Activated CD4-positive, alpha-beta T cell treated with anti-CD3 and anti-CD28 coated beads, Interleukin-2, amount 10 ng/mL, durations not matched to agents 24 days and 14 days (primary cell): ENCODE measurements at regions of chr3 and their contacts with region 1.

Region 1: GRCh38 chr3:124467980-124468902 is 262.0 kb upstream of the UMPS start:
- DNase-seq: peak; percentile 75
- H3K4me3 Mint-ChIP-seq: no peak overlapping the region
- H3K27ac Mint-ChIP-seq: no peak overlapping the region
- H3K4me1 Mint-ChIP-seq: no peaks in the 10 kb centered on the region
- H3K27me3 Mint-ChIP-seq: peaks cover 18% of the 10 kb centered on the region

Region 2: GRCh38 chr3:123997543-123997942 is 470.7 kb before region 1 on chr3:
- intact Hi-C with region 1: no loop called
- DNase-seq: no peak
- H3K4me3 Mint-ChIP-seq: no peak overlapping the region
- H3K27ac Mint-ChIP-seq: no peak overlapping the region
- H3K4me1 Mint-ChIP-seq: no peaks in the 10 kb centered on the region
- H3K27me3 Mint-ChIP-seq: peaks cover 10% of the 10 kb centered on the region

Region 3: GRCh38 chr3:124351430-124352148 is 116.7 kb before region 1 on chr3:
- intact Hi-C with region 1: loop called (anchors 5 kb)
- DNase-seq: no peak
- H3K4me3 Mint-ChIP-seq: no peak overlapping the region
- H3K27ac Mint-ChIP-seq: no peak overlapping the region
- H3K4me1 Mint-ChIP-seq: no peaks in the 10 kb centered on the region
- H3K27me3 Mint-ChIP-seq: peaks cover 9% of the 10 kb centered on the region